Dorsolateral prefrontal cortex (tissue), 120 donors: ENCODE measurements at regions of chr7 and their contacts with region 1.

Region 1: DNA sequence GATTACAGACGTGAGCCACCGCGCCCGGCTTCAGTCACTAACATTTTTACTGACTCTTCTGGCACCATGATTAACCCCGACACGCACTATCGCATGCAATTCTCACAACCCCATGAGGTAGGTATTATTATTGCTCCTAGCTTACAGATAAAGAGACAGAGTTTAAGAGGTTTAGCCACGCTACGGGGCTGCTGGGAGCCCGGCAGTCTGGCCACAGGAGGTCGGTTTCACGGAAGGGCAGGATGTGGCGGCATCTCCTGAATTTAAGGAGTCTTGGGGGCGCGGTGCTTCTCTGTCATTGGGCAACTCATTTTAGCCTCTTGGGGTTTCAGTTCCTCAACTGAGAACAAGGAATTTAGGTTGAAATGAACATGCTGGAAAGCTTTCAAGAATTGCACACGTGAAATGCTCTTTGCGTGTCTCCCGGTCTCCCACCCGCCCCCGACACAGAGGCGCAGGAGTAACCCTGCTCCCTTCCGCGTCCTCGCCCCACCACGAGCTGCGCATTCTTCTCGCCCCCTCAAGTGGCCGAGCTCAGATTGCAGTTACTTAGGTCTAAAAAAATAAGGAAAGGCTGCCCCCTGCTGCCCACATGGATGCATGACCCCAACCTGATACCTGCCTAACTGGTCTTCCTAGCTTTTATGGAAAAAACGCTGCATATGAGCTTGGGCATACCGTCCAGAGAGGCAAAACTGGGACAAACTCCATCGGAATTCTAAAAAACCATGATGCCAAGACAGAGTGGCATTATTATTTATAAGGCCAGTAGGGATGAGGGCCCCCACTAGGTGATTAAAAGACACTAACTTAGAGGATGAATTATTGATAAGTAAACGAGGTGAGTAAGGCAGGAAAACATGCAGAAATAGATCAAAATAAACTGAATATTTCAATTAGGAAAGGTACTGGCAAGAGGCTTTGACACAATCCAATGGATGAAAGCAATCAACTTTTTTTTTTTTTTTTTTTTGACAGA is 12.4 kb downstream of the PRSS2 start:
- DNase-seq: peak; percentile 78 to 93 (median 88)
- H3K4me3 ChIP-seq: peak overlapping the region in 58 of 59 donors; percentile 9 to 67 (median 48)
- H3K27ac ChIP-seq: peak overlapping the region in 1 of 59 donors; percentile 42
- H3K27me3 ChIP-seq: peaks cover 0 to 6% (median 0%) of the 10 kb centered on the region in 45 donors
- CTCF ChIP-seq: peak; percentile 73 to 99 (median 96)

Region 2: DNA sequence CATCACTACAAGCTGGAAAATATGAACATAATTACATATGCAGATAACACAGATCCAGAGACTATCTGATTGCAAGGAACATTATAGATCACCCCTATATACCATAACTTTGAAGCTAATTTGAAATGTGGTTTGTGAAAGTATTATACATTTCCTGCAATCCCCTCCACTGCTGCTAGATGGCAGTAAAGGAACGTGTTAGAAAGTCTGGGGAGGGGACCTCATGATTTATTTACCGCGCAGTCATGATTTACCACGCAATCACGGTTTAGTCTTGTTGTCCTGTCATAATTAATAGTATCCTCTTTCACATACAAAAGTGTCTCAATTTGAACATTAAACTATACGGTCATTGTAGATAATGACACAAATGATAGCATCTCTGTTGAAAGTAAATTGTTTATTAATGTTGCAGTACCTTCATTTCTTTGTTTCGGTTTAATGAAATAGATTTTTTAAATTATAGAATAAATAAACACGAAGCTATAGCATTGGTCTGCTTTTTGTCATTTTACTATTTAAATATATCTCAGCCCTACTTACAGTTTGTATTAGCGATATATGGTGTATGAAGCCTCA is 179.3 kb before region 1 on chr7:
- intact Hi-C with region 1: loop called in 1 of 2 experiments (anchors 10 kb)
- DNase-seq: peak in 2 of 10 donors; percentile 36 to 47
- H3K4me3 ChIP-seq: peak overlapping the region in 21 of 59 donors; percentile 2 to 44 (median 22)
- H3K27ac ChIP-seq: no peak overlapping the region
- H3K27me3 ChIP-seq: peaks cover 0 to 5% (median 0%) of the 10 kb centered on the region in 45 donors
- CTCF ChIP-seq: peak; percentile 61 to 92 (median 78)

Region 3: DNA sequence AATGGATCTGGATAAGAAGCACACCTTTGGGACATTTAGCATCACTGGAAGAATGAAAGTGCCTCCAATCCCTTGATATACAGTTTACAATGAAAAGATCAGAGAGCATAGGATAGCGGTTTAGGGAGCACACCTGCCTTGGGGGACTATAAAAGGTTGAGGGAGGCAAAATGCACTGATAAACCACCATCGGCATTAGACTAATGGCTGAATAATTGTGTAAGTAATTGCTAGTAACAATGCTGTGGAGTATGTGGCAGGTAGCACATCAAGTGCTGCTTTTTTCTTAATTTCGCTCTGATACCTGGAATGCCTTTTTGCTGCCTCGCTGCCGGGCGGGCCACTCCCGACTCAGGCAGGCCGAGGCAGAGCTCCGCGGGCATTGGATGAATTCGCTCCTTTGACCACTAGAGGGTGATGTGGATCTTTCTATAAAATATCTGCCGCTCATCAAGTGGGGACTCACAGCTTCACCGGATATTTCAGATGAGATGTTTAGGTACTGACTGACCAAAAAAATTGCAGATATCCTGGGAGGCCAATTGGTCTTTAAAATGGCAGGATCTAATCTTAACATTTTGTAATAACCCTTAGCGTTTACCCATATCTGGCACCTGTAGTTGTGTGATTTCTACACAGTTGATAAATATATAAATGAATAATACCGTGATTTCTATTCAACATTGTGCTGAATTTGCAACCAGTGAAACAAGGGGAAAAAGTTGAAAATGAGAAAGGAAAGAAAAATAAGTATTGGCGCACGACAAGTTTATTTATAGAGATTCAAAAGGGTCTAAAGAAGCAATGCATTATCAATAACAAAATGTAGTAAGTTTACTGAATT is 150.7 kb before region 1 on chr7:
- intact Hi-C with region 1: loop called (anchors 2 to 5 kb)
- DNase-seq: peak in 7 of 10 donors; percentile 30 to 75 (median 55)
- H3K4me3 ChIP-seq: no peak overlapping the region
- H3K27ac ChIP-seq: no peak overlapping the region
- H3K27me3 ChIP-seq: peaks cover 0 to 28% (median 2%) of the 10 kb centered on the region in 45 donors
- CTCF ChIP-seq: peak; percentile 58 to 94 (median 85)